Astrocyte of the spinal cord (primary cell): ENCODE measurements at regions of chr2 and their contacts with region 1.

Region 1: GRCh38 chr2:157789933-157790511 is 86.1 kb downstream of the ACVR1 start:
- DNase-seq: no peak
- H3K4me3 ChIP-seq: no peak overlapping the region
- CTCF ChIP-seq: no peak

Region 2: GRCh38 chr2:157876066-157876787 is 86.2 kb after region 1 on chr2 and contains the start of gene ACVR1:
- in situ Hi-C with region 1: loop called (anchors 5 kb)
- DNase-seq: peak; percentile 98
- H3K4me3 ChIP-seq: peak within 1 kb of the TSS; percentile 79
- CTCF ChIP-seq: peak; percentile 18